Activated CD4-positive, alpha-beta T cell treated with anti-CD3 and anti-CD28 coated beads for 36 hours (primary cell): ENCODE measurements at regions of chr17 and their contacts with region 1.

Region 1: GRCh38 chr17:64020056-64020766 is at the start of gene ICAM2:
- DNase-seq: peak; percentile 92
- ATAC-seq: peak; percentile 73
- H3K4me3 Mint-ChIP-seq: peak within 1 kb of the TSS; percentile 84
- H3K27ac Mint-ChIP-seq: peak within 1 kb of the TSS; percentile 97
- H3K4me1 Mint-ChIP-seq: peaks cover 68% of the 10 kb centered on the region
- H3K27me3 Mint-ChIP-seq: no peaks in the 10 kb centered on the region
- total RNA-seq, gene ICAM2: 46.6 to 49.0 TPM

Region 2: GRCh38 chr17:63579540-63580001 is 440.6 kb before region 1 on chr17:
- CTCF ChIA-PET with region 1: no interaction called
- POLR2A ChIA-PET with region 1: no interaction called
- intact Hi-C with region 1: no loop called
- DNase-seq: no peak
- ATAC-seq: no peak
- H3K4me3 Mint-ChIP-seq: no peak overlapping the region
- H3K27ac Mint-ChIP-seq: no peak overlapping the region
- H3K4me1 Mint-ChIP-seq: no peaks in the 10 kb centered on the region
- H3K27me3 Mint-ChIP-seq: no peaks in the 10 kb centered on the region

Region 3: DNA sequence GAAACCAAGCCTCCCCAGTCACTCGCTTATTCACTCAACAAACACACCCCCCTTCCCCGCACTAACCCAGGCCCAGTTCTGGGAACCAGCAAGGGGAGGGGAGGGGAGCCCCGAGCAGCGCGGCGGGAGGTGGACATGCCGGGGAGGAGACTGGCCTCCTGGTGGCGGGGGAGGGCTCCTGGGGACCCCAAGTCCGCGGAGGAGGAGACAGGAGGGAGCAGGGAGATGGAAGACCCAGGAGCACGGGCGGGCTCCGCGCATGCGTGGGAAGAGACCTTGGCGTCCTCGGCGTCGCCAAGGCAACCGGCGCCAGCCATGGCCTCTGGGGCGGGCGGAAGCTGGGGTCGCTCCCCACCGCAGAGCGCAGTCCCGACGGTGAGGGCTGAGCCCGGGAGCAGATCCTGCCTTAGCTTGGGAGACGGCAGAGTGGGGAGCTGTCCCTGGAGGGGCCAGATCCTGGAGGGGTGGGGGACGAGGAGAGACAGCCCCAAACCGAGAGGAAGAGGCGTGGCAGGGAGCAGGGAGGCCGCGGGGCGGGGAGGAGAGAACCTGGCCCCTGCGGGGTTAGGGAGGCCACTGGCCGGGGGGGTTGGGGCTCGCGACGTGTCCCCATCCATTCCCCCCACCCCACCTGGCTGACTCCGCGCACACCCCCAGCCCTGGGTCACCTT is 22.0 kb before region 1 on chr17 and contains the start of gene PRR29:
- CTCF ChIA-PET with region 1: interaction called, 37 read pairs
- POLR2A ChIA-PET with region 1: no interaction called
- intact Hi-C with region 1: loop called (anchors 1 to 2 kb)
- DNase-seq: peak; percentile 84
- ATAC-seq: peak; percentile 76
- H3K4me3 Mint-ChIP-seq: peak within 1 kb of the TSS; percentile 80
- H3K27ac Mint-ChIP-seq: peak within 1 kb of the TSS; percentile 31
- H3K4me1 Mint-ChIP-seq: peaks cover 30% of the 10 kb centered on the region
- H3K27me3 Mint-ChIP-seq: no peaks in the 10 kb centered on the region
- total RNA-seq, gene PRR29: 1.0 to 1.5 TPM

Region 4: DNA sequence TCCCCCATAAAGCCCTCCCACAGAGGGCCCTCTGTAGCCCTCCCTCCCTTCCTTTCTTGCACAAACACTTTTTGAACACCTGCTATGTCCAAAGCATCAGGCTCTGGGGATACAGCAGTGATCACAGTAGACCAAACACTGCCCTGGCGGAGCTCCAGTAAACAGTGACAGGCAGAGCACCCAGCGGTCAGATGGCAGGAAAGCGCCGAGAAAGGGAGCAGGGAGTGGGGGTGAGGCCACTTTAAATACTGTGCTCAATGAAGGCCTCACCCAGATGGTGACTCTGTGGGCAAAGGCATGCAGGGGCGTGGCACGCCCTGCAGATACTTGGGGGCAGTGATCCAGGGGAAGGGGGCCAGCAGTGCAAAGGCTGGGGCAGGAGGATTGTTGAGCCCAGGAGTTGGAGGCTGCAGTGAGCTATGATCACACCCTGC is 14.5 kb before region 1 on chr17:
- CTCF ChIA-PET with region 1: interaction called, 13 read pairs
- POLR2A ChIA-PET with region 1: interaction called, 11 read pairs
- intact Hi-C with region 1: no loop called
- DNase-seq: peak; percentile 2
- ATAC-seq: no peak
- H3K4me3 Mint-ChIP-seq: no peak overlapping the region
- H3K27ac Mint-ChIP-seq: peak overlapping the region; percentile 12
- H3K4me1 Mint-ChIP-seq: peaks cover 37% of the 10 kb centered on the region
- H3K27me3 Mint-ChIP-seq: no peaks in the 10 kb centered on the region

Region 5: GRCh38 chr17:64063766-64064224 is 43.6 kb after region 1 on chr17:
- CTCF ChIA-PET with region 1: interaction called, 9 read pairs
- POLR2A ChIA-PET with region 1: interaction called, 6 read pairs
- intact Hi-C with region 1: loop called (anchors 1 to 2 kb)
- DNase-seq: peak; percentile 84
- ATAC-seq: peak; percentile 45
- H3K4me3 Mint-ChIP-seq: peak overlapping the region; percentile 56
- H3K27ac Mint-ChIP-seq: peak overlapping the region; percentile 85
- H3K4me1 Mint-ChIP-seq: peaks cover 84% of the 10 kb centered on the region
- H3K27me3 Mint-ChIP-seq: no peaks in the 10 kb centered on the region

Region 6: GRCh38 chr17:64320613-64321553 is 300.7 kb after region 1 on chr17:
- CTCF ChIA-PET with region 1: no interaction called
- POLR2A ChIA-PET with region 1: no interaction called
- intact Hi-C with region 1: no loop called
- DNase-seq: peak; percentile 68
- ATAC-seq: peak; percentile 64
- H3K4me3 Mint-ChIP-seq: no peak overlapping the region
- H3K27ac Mint-ChIP-seq: no peak overlapping the region
- H3K4me1 Mint-ChIP-seq: peaks cover 6% of the 10 kb centered on the region
- H3K27me3 Mint-ChIP-seq: no peaks in the 10 kb centered on the region